B cell (primary cell): ENCODE measurements at regions of chr15 and their contacts with region 1.

Region 1: GRCh38 chr15:34367101-34368081 is at the start of gene LPCAT4:
- DNase-seq: peak; percentile 94
- ATAC-seq: peak; percentile 84
- H3K4me3 ChIP-seq: peak within 1 kb of the TSS; percentile 38 to 90 (median 66)
- H3K4me3 Mint-ChIP-seq: peak within 1 kb of the TSS; percentile 96
- H3K27ac ChIP-seq: peak within 1 kb of the TSS; percentile 70 to 88
- H3K27ac Mint-ChIP-seq: peak within 1 kb of the TSS; percentile 97
- H3K4me1 ChIP-seq: peaks cover 18 to 28% of the 10 kb centered on the region in 2 donors
- H3K4me1 Mint-ChIP-seq: peaks cover 40% of the 10 kb centered on the region
- H3K27me3 ChIP-seq: no peaks in the 10 kb centered on the region
- H3K27me3 Mint-ChIP-seq: no peaks in the 10 kb centered on the region
- CTCF ChIP-seq: peak; percentile 94
- total RNA-seq, gene LPCAT4: 64.2 and 68.1 TPM in 2 replicates

Region 2: GRCh38 chr15:34038023-34038870 is 329.1 kb before region 1 on chr15:
- CTCF ChIA-PET with region 1: interaction called, 4 read pairs
- POLR2A ChIA-PET with region 1: no interaction called
- intact Hi-C with region 1: loop called (anchors 5 kb)
- DNase-seq: peak; percentile 89
- ATAC-seq: peak; percentile 78
- H3K4me3 ChIP-seq: peak overlapping the region; percentile 63 to 98 (median 66)
- H3K4me3 Mint-ChIP-seq: peak overlapping the region; percentile 97
- H3K27ac ChIP-seq: peak overlapping the region; percentile 49 to 78
- H3K27ac Mint-ChIP-seq: peak overlapping the region; percentile 96
- H3K4me1 ChIP-seq: peaks cover 14 to 15% of the 10 kb centered on the region in 2 donors
- H3K4me1 Mint-ChIP-seq: peaks cover 18% of the 10 kb centered on the region
- H3K27me3 ChIP-seq: no peaks in the 10 kb centered on the region
- H3K27me3 Mint-ChIP-seq: no peaks in the 10 kb centered on the region
- CTCF ChIP-seq: no peak

Region 3: GRCh38 chr15:34109797-34110663 is 257.4 kb before region 1 on chr15:
- CTCF ChIA-PET with region 1: interaction called, 12 read pairs
- POLR2A ChIA-PET with region 1: no interaction called
- intact Hi-C with region 1: no loop called
- DNase-seq: peak; percentile 38
- ATAC-seq: peak; percentile 54
- H3K4me3 ChIP-seq: no peak overlapping the region
- H3K4me3 Mint-ChIP-seq: no peak overlapping the region
- H3K27ac ChIP-seq: no peak overlapping the region
- H3K27ac Mint-ChIP-seq: no peak overlapping the region
- H3K4me1 ChIP-seq: no peaks in the 10 kb centered on the region
- H3K4me1 Mint-ChIP-seq: no peaks in the 10 kb centered on the region
- H3K27me3 ChIP-seq: no peaks in the 10 kb centered on the region
- H3K27me3 Mint-ChIP-seq: peaks cover 10% of the 10 kb centered on the region
- CTCF ChIP-seq: peak; percentile 57

Region 4: DNA sequence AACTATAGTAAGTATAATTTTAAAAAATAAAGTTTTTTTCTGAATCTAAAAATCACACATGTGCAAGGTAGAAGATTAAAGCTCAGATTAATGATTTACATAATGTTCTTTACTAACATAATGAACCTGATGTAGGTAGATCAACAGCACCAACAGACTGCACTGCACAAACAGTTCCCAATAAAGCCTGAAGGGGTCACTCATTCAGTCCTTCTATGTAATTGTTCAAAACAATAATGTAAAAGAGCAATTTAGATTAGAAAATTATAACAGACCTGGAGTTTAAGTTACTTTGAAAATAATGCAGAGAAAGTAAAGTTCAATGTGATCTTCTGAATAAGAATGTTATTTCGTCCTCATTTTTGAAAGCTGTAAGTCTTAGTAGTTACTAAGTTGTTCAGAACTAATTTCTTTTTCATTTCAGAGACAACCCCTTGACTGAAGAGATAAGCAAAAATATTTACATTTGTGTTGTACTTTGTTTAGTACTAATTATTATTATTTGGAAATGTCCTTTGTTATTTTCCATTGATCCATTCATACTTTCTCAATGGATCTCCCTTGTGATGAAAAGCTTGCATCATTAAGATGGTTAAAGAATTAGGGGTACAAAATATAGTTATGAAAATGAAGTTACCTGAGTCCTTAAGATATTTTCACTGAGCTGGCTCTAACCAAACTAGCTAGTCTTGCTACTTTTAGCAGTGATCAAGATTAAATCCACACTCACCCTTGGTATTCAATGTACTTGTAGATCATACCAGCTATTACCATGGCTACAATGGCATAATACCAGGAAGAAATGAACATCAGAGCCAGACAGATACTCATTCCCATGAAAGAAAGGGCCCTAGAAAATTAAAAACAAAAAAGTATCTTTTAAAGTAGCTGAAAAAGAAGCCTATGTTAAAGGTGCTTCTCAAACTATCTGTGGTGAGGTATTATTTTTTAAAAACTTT is 125.7 kb before region 1 on chr15:
- CTCF ChIA-PET with region 1: interaction called, 129 read pairs
- POLR2A ChIA-PET with region 1: interaction called, 5 read pairs
- intact Hi-C with region 1: loop called (anchors 1 kb)
- DNase-seq: peak; percentile 70
- ATAC-seq: peak; percentile 80
- H3K4me3 ChIP-seq: no peak overlapping the region
- H3K4me3 Mint-ChIP-seq: no peak overlapping the region
- H3K27ac ChIP-seq: no peak overlapping the region
- H3K27ac Mint-ChIP-seq: no peak overlapping the region
- H3K4me1 ChIP-seq: no peaks in the 10 kb centered on the region
- H3K4me1 Mint-ChIP-seq: no peaks in the 10 kb centered on the region
- H3K27me3 ChIP-seq: no peaks in the 10 kb centered on the region
- H3K27me3 Mint-ChIP-seq: no peaks in the 10 kb centered on the region
- CTCF ChIP-seq: peak; percentile 96

Region 5: DNA sequence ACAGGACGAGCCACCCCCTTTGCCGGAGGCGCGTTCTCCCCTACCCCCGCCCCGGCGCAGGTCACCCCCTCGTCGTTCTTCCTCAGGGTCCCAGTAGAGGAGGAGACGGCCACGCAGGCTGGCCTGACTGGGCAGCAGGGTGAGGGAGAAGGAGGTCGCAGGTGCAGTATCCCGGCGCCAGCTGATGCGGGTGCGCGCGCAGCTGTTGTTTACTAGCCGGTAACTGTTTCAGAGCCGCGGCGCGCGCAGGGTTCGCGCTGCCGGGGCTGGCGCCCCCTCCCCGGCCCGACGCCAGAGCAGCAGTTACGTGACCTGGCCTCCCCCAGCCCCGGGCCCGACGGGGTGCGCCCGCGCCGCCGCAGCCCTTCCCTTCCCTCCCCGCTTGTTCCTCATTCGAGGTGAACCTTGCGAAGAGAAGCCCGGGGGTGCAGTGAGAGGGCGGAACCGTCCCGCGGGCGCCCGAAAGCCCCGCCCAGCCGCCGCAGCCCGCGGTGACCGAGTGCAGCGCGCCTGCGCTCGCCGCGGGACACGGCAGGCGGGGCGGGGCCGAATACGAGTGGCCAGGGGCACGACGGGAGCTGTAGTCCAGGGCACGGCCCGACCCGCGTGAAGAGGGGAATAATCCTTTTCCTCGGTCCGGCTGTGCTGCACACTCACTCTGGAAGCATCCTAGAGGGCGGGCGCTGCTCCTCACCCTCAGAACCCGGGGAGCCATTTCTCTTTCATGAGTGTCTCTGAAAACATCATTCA is 29.7 kb before region 1 on chr15 and contains the start of gene SLC12A6:
- CTCF ChIA-PET with region 1: interaction called, 52 read pairs
- POLR2A ChIA-PET with region 1: interaction called, 23 read pairs
- intact Hi-C with region 1: loop called (anchors 1 kb)
- DNase-seq: peak; percentile 97
- ATAC-seq: peak; percentile 84
- H3K4me3 ChIP-seq: peak within 1 kb of the TSS; percentile 96 to 98 (median 97)
- H3K4me3 Mint-ChIP-seq: peak within 1 kb of the TSS; percentile 100
- H3K27ac ChIP-seq: peak within 1 kb of the TSS; percentile 87 to 93
- H3K27ac Mint-ChIP-seq: peak within 1 kb of the TSS; percentile 99
- H3K4me1 ChIP-seq: peaks cover 34 to 37% of the 10 kb centered on the region in 2 donors
- H3K4me1 Mint-ChIP-seq: peaks cover 48% of the 10 kb centered on the region
- H3K27me3 ChIP-seq: no peaks in the 10 kb centered on the region
- H3K27me3 Mint-ChIP-seq: no peaks in the 10 kb centered on the region
- CTCF ChIP-seq: no peak
- total RNA-seq, gene SLC12A6: 141 and 156 TPM in 2 replicates

Region 6: DNA sequence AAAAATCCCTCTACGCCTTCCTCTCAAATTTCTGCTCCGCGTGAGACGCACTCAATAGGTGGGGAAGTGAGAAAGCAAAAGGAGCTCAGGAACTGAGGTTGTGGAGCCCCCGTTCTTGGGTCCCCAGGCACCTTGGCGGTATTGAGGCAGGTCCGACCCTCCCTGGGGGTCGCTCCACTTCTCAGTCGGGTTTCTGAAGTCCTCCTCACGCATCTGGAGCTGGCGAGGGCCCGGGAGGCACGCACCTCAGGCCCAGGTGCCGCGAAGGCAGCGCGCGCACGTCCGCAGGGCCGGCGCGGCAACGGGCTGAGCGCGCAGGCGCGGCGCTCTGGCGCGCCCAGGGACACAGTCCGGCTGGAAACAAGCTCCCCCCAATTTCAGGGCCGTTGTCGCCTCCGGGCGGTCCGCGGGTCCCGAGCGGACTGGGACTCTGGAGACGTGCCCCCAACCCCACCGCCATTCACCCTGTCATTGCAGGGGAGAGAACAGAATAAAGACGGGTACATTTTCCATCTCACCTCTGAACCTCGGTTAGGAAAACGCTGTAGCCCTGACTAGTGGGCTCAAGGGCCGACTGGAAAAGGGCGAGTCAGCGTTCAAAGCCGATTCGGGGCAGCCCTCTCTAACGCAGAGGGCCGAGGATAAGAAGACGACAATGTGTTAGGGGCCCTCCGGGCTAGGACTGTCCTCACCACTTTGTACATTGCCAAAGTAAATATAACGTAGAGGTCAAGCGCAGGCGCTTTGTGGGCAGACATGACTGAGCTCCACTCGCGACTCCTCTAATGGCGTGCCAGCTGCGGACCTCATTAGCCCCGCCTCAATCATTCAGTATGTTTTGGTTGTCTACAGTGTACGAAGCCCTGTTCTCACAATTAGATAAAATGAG is 620.8 kb after region 1 on chr15 and contains the start of gene ZNF770:
- CTCF ChIA-PET with region 1: no interaction called
- POLR2A ChIA-PET with region 1: no interaction called
- intact Hi-C with region 1: loop called (anchors 5 kb)
- DNase-seq: peak; percentile 94
- ATAC-seq: peak; percentile 86
- H3K4me3 ChIP-seq: peak within 1 kb of the TSS; percentile 86 to 100 (median 96)
- H3K4me3 Mint-ChIP-seq: peak within 1 kb of the TSS; percentile 99
- H3K27ac ChIP-seq: peak within 1 kb of the TSS; percentile 90 to 97
- H3K27ac Mint-ChIP-seq: peak within 1 kb of the TSS; percentile 100
- H3K4me1 ChIP-seq: peaks cover 19 to 22% of the 10 kb centered on the region in 2 donors
- H3K4me1 Mint-ChIP-seq: peaks cover 45% of the 10 kb centered on the region
- H3K27me3 ChIP-seq: no peaks in the 10 kb centered on the region
- H3K27me3 Mint-ChIP-seq: peaks cover 2% of the 10 kb centered on the region
- CTCF ChIP-seq: no peak
- total RNA-seq, gene ZNF770: 45.8 and 49.3 TPM in 2 replicates